Left ventricle myocardium superior (tissue), 1 donor: ENCODE measurements at regions of chr16 and their contacts with region 1.

Region 1: GRCh38 chr16:76309639-76310335 is 32.6 kb downstream of the CNTNAP4 start:
- DNase-seq: no peak
- ATAC-seq: no peak

Region 2: GRCh38 chr16:76360404-76360803 is 50.6 kb after region 1 on chr16:
- intact Hi-C with region 1: loop called (anchors 10 kb)
- DNase-seq: no peak
- ATAC-seq: peak; percentile 28

Region 3: GRCh38 chr16:76622876-76623275 is 313.1 kb after region 1 on chr16:
- intact Hi-C with region 1: no loop called
- DNase-seq: no peak
- ATAC-seq: no peak